Naive thymus-derived CD8-positive, alpha-beta T cell (primary cell): ENCODE measurements at regions of chr16 and their contacts with region 1.

Region 1: DNA sequence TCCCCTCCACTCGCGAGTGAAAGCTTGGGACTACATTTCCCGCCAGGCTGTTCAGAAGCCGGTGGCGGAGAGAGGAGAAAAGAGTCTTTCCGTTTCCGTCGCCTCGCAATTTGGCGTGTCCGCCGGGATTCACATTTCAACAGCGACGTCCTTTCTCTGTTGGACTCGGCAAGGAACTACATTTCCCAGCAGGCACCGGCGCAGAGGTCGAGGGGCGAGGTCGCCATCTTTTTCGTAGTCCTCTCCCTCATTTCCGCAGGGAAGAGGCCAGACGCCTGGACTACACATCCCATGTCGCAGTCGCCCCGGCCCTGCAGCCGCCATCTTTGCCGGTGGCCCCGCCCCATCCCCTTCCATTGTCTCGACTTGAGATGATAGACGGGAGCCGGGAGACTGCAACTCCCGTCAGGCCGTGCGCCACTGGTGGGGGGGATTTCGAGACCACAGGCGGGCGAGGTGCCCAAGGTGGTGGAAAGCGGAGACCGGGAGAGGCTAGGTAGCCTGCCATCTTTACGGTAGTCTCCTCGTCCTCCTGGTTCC is 882 bp upstream of the FBXL19 start:
- DNase-seq: peak; percentile 95 to 100 (median 100)
- ATAC-seq: peak; percentile 79 to 81
- H3K4me3 Mint-ChIP-seq: peak overlapping the region; percentile 96 to 100 (median 99)
- H3K27ac Mint-ChIP-seq: peak overlapping the region; percentile 97 to 100 (median 99)
- H3K4me1 Mint-ChIP-seq: peaks cover 21 to 33% (median 27%) of the 10 kb centered on the region in 4 donors
- H3K27me3 Mint-ChIP-seq: no peaks in the 10 kb centered on the region

Region 2: DNA sequence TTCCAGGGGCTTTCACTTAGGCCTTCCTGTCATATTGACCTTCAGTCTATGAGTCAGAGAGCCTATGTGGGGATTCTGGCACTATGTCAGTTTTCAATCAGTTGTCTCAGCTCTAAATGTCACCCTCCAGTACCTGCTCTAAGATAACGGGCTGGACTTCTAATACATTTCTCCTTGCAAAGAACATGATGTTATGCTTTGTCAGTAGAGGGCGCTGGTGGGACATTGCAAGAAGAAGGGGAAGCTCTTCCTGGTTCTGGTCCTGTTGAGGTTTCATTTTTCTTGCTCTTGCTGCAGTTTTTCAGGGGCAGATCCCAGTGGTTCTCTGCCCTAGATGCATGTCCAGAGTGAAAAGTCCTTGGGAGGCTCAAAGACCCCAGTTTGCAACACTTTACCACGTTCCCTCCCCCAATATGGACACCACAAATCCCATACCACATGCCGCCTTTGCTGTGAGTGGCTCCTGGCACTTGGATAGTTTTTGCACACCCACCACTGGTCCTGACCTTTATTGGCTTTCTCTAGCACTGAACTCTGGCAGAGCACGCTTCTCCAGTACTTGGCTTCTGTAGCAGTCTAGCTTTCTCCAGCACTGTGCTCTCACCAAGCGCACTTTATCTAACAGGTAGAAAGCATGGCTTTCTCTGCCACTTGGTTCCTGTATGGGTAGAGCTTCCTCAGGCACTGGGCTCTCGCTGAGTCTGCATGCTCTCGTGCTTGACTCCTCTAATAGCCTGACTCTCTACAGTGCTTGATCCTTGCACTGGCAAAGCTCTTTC is 77.6 kb before region 1 on chr16:
- POLR2A ChIA-PET with region 1: interaction called, 10 read pairs
- DNase-seq: peak; percentile 60 to 93 (median 82)
- ATAC-seq: peak; percentile 91 to 98
- H3K4me3 Mint-ChIP-seq: peak overlapping the region; percentile 8 to 69 (median 40)
- H3K27ac Mint-ChIP-seq: peak overlapping the region; percentile 19 to 91 (median 83)
- H3K4me1 Mint-ChIP-seq: peaks cover 8 to 11% (median 9%) of the 10 kb centered on the region in 4 donors
- H3K27me3 Mint-ChIP-seq: no peaks in the 10 kb centered on the region

Region 3: DNA sequence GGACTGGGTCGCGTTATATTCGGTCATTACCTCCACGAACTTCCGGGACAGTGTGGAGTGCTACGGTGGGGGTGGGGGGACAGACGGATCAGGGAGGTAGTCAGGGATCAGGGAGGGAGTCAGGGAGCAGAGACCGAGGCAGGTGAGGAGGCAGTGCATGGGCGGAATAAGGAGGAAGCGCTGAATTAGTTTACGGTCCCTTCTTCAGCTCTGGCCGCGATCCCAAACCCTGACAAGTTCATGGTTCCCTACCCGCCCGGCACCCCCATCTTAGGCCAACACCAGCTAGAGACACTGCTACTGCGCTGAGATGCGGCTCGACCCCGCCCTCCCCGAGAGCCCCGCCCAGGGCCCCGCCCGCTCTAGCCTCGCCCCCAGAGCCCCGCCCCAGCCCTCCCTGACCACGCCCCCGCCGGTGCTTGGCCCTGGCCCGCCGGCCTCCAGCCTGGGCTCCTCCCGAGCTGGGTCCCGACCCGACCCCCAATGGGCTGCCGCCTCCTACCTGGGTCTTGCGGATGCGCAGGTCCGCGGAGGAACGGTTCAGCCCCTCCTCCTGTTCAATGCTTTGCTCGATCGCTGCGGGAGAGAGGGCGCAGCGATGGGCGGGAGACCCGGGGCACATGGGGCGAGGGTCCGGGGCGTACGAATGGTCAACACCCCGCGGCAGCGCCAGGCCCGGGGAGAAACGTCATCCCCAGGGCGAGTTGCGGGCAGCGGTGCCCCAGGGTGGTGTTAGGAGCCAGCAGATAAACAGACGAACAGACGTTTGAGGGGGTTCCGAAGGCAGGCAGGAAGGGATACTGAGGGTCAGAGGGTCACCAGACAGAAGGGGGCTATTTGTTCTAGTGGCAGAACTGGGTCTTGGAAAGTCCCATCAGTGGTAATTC is 74.8 kb after region 1 on chr16:
- POLR2A ChIA-PET with region 1: no interaction called
- DNase-seq: peak; percentile 51 to 93 (median 75)
- ATAC-seq: peak; percentile 97 to 99
- H3K4me3 Mint-ChIP-seq: peak overlapping the region; percentile 81 to 93 (median 84)
- H3K27ac Mint-ChIP-seq: peak overlapping the region; percentile 65 to 95 (median 92)
- H3K4me1 Mint-ChIP-seq: peaks cover 2 to 12% (median 8%) of the 10 kb centered on the region in 4 donors
- H3K27me3 Mint-ChIP-seq: no peaks in the 10 kb centered on the region